Calu3 (cell line): ENCODE measurements at regions of chr6 and their contacts with region 1.

Region 1: GRCh38 chr6:36302227-36302976 is 32.5 kb downstream of the PNPLA1 start:
- DNase-seq: peak; percentile 96
- H3K4me3 Mint-ChIP-seq: no peak overlapping the region
- H3K27ac Mint-ChIP-seq: no peak overlapping the region
- H3K4me1 Mint-ChIP-seq: peaks cover 16% of the 10 kb centered on the region
- H3K27me3 Mint-ChIP-seq: peaks cover 49% of the 10 kb centered on the region
- CTCF ChIP-seq: peak; percentile 98

Region 2: DNA sequence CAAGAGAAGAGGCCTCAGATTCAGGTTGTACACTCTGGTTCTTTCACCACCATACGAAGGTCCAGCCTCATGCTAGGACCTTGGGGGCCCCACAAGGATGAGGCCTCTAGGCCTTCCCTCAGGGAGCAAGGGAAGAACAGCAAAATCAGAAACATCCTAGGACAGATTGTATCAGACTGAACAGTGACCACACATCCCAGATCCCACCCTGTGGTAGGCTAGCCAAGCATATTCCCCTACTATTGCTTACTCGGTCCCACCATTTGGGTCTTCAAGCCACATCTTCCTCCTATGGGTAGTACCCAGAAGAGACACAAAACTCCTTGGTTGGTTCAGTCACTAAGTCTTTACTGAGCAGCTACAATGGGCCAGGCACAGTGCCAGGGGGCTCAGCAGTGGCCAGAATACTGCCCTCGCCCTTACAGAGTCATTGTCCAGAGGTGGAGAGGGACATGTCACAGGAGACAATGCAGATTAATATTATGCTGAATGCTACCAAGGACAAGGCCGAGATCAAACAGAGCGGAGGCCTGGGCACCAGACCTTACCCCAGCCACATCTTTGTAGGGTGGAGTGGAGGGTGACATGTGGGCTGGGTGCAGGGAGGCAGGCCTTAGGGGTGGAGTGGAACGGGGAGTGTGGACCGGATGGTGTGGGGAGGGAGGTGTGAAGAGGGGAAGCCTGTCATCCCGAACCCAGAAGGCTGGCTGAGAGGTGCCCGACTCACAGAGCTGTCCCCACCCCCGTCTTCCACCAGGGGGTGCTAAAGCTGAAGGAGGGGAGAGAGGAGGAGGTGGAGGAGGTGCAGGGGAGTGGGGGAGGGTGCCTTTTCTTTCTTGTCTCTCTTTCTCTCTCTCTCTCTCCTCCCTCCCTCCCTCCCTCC is 178.9 kb before region 1 on chr6:
- CTCF ChIA-PET with region 1: interaction called, 6 read pairs
- intact Hi-C with region 1: loop called (anchors 5 kb)
- DNase-seq: peak; percentile 94
- H3K4me3 Mint-ChIP-seq: peak overlapping the region; percentile 9
- H3K27ac Mint-ChIP-seq: peak overlapping the region; percentile 17
- H3K4me1 Mint-ChIP-seq: peaks cover 25% of the 10 kb centered on the region
- H3K27me3 Mint-ChIP-seq: no peaks in the 10 kb centered on the region
- CTCF ChIP-seq: peak; percentile 77

Region 3: GRCh38 chr6:36290661-36291620 is 11.5 kb before region 1 on chr6:
- CTCF ChIA-PET with region 1: interaction called, 11 read pairs
- intact Hi-C with region 1: no loop called
- DNase-seq: peak; percentile 55
- H3K4me3 Mint-ChIP-seq: peak overlapping the region; percentile 21
- H3K27ac Mint-ChIP-seq: peak overlapping the region; percentile 63
- H3K4me1 Mint-ChIP-seq: peaks cover 37% of the 10 kb centered on the region
- H3K27me3 Mint-ChIP-seq: peaks cover 4% of the 10 kb centered on the region
- CTCF ChIP-seq: no peak

Region 4: DNA sequence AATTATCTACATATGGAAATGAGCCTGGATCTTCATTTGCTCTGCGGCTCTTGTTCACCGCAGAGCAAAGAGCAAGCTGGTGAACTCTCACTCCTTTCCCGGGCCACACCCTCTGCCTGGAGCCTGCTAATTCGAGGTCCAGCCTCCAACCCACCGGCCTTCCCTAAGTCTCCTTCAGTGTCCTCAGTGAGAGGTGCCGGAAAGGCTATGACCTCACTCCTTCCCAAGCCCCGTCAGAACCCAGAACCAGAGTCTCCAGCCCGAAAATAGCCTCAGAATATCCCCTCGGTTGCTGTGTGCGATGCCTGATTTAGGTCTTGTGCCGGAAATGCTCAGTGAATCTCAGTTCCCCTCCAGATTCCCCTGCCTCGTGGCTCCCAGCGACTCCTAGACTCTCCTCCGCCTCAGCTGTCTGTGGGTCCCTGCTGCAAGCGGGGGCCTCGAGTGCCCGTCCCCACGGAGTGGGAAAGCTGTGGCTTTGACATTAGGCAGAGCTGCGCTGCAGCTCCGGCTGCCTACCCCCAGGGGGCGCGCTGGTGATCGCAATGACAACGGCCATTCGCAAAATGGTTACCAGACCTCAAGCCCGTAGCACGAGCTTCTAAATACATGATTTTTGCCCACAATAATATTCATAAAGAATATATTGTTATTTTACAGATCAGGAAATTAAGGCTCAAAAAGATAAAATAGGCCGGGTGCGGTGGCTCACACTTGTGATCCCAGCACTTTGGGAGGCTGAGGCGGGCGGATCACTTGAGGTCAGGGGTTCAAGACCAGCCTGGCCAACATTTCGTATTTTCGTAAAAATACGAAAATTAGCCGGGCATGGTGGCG is 38.4 kb after region 1 on chr6:
- CTCF ChIA-PET with region 1: interaction called, 15 read pairs
- intact Hi-C with region 1: no loop called
- DNase-seq: peak; percentile 84
- H3K4me3 Mint-ChIP-seq: peak overlapping the region; percentile 58
- H3K27ac Mint-ChIP-seq: no peak overlapping the region
- H3K4me1 Mint-ChIP-seq: peaks cover 21% of the 10 kb centered on the region
- H3K27me3 Mint-ChIP-seq: no peaks in the 10 kb centered on the region
- CTCF ChIP-seq: peak; percentile 98

Region 5: DNA sequence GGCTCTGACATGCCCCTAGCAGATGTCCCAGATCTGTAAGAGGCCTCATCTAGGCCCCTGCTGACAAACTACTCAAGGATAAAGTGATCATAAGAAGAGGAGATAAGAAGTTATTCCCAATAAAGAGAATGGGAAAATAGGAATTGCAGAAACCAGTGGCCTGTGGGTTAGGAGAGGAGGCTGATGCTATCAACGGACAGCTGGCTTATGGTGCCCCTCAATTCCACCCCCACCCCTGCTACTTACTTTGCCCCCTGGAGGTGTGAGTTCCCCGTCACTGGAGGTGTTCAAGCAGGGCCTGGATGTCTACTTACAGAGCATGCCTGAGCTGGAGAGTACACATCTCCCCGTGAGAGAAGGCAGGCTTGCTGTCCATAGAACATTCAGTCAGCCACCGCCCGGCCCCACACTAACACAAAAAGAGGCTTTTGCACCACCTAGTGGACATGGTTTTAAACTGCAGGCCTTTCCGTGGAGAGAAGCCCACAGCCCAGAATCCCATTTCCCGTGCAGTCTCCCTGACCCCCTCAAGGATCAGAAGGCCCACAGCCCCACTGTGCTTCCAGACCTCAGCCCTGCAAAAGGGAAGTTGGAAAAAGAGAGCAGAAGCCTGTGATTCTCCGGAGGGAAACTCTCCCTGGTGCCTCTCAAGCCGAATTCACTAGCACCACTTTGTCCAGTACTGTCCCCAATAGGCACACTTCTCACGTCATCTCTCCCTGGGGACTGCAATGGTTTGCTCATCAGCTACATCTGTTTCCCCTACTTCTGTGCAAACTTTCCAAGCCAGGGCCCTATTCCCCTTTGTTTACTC is 58.0 kb after region 1 on chr6:
- CTCF ChIA-PET with region 1: interaction called, 31 read pairs
- intact Hi-C with region 1: loop called (anchors 1 kb)
- DNase-seq: peak; percentile 85
- H3K4me3 Mint-ChIP-seq: no peak overlapping the region
- H3K27ac Mint-ChIP-seq: no peak overlapping the region
- H3K4me1 Mint-ChIP-seq: peaks cover 47% of the 10 kb centered on the region
- H3K27me3 Mint-ChIP-seq: no peaks in the 10 kb centered on the region
- CTCF ChIP-seq: peak; percentile 82